BJ (cell line): ENCODE measurements at regions of chr3 and their contacts with region 1.

Region 1: DNA sequence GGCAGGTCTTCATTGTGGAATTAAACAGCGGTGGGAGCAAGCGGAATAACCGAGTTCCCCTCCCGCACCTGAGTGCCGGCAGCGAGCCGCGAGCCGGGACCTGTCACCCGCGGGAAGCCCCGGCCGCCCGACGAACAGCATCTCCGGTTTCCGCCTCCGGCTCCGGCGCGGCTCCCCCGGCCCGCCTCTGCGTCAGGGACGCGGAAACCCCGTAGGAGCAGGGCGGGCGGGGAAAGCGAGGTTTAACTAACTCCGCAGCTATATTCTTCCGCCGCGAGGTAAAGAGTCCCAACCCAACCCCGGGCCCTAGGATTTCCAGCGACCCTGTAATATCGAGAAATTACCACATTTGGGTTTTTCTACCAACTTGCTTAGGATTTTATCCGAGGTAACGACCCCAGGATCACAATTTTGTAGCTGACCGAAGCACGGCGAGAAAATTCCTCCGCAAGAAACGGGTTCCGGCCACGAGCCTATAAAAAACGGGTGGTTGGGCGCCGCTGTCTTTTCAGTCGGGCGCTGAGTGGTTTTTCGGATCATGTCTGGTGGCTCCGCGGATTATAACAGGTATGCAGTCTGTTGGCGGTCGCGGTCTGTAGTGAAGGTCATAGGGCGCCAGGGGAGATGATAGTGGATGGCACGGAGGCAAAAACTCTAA is at the start of gene EIF4A2:
- DNase-seq: no peak
- H3K4me3 ChIP-seq: peak within 1 kb of the TSS; percentile 93
- H3K27me3 ChIP-seq: no peaks in the 10 kb centered on the region
- CTCF ChIP-seq: no peak
- polyA plus RNA-seq, gene EIF4A2: 210 and 511 TPM in 2 replicates

Region 2: DNA sequence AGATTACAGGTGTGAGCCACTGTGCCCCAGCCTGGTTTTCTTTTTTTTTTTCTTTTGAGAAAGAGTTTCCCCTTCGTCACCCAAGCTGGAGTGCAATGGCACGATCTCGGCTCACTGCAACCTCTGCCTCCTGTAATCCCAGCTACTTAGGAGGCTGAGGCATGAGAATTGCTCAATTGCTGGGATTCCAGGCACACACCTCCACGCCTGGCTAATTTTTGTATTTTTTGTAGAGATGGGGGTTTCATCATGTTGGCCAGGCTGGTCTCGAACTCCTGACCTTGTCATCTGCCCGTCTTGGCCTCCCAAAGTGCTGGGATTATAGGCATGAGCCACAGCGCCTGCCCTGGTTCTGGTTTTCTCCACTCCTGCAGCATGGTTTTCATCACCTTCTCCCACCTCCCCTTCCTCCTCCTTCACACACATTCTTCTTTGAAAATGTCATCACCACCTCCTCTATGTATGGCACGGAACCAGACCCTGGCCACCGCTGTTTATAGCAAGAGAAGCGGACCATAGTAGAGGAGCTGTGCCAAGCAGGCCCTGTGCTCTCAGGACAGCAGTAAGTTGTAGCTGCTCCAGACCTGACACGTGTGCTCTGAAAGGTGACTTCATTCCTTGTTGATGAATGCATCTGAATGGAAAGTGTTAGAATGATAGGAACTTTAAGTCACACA is 185.0 kb before region 1 on chr3:
- CTCF ChIA-PET with region 1: no interaction called
- POLR2A ChIA-PET with region 1: interaction called, 15 read pairs
- DNase-seq: no peak
- H3K4me3 ChIP-seq: no peak overlapping the region
- H3K27me3 ChIP-seq: peaks cover 2% of the 10 kb centered on the region; the same call in 1 of the 2 replicates
- CTCF ChIP-seq: no peak

Region 3: DNA sequence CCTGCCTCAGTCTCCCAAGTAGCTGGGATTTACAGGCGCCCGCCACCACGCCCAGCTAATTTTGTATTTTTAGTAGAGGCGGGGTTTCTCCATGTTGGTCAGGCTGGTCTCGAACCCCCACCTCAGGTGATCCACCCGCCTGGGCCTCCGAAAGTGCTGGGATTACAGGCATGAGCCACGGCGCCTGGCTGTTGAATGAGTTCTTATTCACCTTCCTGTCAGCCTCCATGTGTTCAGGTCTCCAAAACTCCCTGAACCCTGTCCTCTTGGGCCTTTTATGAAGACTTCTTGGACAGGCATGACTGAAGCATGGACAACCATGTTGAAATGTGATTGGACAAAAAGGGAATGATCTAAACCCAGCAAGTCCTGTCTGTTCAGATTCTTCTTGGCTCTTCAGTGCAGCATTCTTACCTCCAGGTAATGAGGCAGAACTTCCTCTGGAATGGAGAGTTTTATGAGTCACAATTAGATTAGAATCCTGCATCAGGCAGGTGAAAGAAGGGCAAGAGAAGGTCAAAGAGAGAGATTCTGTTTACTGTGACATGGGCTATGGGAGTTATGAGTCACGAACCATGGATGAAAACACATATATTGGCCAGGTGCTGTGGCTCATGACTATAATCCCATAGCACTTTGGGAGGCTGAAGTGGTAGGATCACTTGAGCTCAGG is 22.9 kb before region 1 on chr3:
- CTCF ChIA-PET with region 1: no interaction called
- POLR2A ChIA-PET with region 1: no interaction called
- DNase-seq: no peak
- H3K4me3 ChIP-seq: no peak overlapping the region
- H3K27me3 ChIP-seq: no peaks in the 10 kb centered on the region
- CTCF ChIP-seq: no peak

Region 4: DNA sequence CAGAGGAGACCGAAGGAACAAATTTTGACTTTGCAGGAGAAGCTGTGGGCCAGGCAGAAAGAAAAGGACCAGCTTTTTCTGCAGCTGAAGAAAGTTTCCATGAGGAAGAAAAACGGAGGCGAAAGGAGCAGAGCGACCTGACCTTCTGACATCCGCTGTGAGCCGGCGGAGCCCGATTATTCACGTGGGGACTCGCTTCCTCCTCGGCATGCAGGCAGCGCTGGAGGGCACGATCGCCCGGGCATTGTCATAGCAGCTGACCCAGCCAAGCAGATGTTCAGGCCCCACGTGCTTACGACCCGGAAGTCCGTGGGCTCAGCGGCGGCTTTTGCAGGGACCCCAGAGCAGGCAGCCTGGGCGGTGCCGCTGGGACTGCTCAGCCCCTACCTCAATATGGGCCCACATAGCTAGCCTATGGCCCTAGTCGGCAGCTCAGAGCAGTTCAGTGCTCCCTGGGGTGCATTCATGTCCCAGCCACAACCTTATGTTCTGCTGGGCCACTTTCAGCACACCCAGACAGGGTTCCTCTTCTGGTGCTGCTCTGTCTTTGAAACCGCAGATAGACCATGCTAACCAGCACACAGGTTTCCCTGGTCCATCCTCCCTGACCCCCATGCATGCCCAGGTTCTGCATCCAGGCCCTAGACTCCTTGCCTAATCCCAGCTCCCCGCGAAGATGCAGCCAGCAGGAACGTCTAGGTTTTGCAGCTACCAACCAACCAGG is 10.3 kb before region 1 on chr3:
- CTCF ChIA-PET with region 1: interaction called, 5 read pairs
- POLR2A ChIA-PET with region 1: interaction called, 10 read pairs
- DNase-seq: no peak
- H3K4me3 ChIP-seq: peak overlapping the region; percentile 18
- H3K27me3 ChIP-seq: no peaks in the 10 kb centered on the region
- CTCF ChIP-seq: no peak

Region 5: GRCh38 chr3:186798239-186798874 is 15.2 kb after region 1 on chr3:
- CTCF ChIA-PET with region 1: no interaction called
- POLR2A ChIA-PET with region 1: no interaction called
- DNase-seq: no peak
- H3K4me3 ChIP-seq: no peak overlapping the region
- H3K27me3 ChIP-seq: no peaks in the 10 kb centered on the region
- CTCF ChIP-seq: no peak